Left colon (tissue), 2 donors: ENCODE measurements at regions of chr2 and their contacts with region 1.

Region 1: DNA sequence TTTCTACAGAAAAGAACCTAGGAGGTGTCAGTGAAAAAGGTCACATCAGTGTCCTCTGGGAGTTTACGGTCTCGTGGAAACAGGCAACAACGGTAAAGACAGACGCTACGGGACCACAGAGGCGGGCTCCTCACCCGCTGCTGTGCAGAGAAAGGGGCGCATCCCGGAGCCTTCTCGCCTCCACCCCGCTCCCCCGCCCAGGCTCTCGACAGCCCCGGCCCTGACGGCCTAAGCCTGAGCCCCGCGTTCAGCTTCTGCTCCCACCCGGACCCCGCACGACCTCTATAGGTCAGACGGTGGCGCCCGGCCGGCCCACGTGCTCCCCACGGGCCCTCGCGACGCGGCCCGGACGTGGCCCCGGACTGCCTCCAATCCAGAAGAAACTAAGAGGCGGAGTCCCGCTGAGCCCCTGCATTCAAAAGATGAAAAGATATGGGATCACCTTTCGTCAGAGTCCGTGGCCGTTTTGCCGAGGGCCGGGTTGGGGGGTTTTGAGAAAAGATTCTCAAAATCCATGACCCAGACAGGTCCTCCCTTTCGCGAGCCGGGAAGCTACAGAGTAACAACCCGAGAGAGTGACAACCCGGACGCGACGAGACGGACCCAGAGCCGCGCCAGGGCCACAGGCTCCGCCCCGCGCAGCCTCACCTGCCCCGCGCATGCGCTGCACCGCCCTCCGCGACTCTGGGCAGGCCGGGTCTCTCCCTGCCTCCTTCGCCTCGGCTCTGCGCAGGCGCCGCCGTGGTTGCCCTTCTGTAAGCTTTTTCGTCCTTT is at the start of gene ZC3H8:
- DNase-seq: peak; percentile 91 to 96
- ATAC-seq: peak; percentile 98
- total RNA-seq, gene ZC3H8: 5.1 to 8.1 TPM

Region 2: DNA sequence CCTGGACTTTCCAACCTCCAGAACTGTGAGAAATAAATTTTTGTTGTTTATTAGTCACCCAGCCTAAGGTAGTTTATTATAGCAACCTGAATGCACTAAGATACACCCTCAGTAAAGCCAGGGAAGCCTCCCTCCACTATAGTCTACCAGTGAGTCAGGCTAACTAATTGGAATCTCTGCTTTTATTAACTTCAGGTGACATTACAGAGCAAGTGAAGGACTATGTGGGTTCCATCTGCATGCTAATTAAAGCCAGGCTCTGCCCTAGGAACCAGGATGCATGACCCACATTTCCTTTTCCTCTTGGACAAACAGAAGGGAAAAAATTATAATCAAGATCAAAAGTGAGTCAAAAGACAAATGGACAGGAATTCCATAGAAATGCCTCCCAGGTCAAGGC is 55.9 kb before region 1 on chr2:
- intact Hi-C with region 1: no loop called
- DNase-seq: no peak
- ATAC-seq: no peak

Region 3: GRCh38 chr2:112433932-112434730 is 179.5 kb after region 1 on chr2:
- intact Hi-C with region 1: loop called in 1 of 2 experiments (anchors 10 kb)
- DNase-seq: peak in 1 of 2 donors; percentile 7
- ATAC-seq: no peak